ENCODE measurements at regions of chr3 and their contacts with region 1.

Region 1: GRCh38 chr3:107938143-107938542 is 152.7 kb downstream of the CD47 start:
- DNase-seq: no peak
- H3K4me3 ChIP-seq: no peak overlapping the region
- H3K27ac ChIP-seq: no peak overlapping the region
- H3K4me1 ChIP-seq: peaks cover 0 to 16% (median 7%) of the 10 kb centered on the region in 4 donors
- H3K27me3 ChIP-seq: no peaks in the 10 kb centered on the region
- CTCF ChIP-seq: peak; percentile 51 to 57 (median 55)
- EP300 ChIP-seq: no peak
- POLR2A ChIP-seq: no peak

Region 2: DNA sequence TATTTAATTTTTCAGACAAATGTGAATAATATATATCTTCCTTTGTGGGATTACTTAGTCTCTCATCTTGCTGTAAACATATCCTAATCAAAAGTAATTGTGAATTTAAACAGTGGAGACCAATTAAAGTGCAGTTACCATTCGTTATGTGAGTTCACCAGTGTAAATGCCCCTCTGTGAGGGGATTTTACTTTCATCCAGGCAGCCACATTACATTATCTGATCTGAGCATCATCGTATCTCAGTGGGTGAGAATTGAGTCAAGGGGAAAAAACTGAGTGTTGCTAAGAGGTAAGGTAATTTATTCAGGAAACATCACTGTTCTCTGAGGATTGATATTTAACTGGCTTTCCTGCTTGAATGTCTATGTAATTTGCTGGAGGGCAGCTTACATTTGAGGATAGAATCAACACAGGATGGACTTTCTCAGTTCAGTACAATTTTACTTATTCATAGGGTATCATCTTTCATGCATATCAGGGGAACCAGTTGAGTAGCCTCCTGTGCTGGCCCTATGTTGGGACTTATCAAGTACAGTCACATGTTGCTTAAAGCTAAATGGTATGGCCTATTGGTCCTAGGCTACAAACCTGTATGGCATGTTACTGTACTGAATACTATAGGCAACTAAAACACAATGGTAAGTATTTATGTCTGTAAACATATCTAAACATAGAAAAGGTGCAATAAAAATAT is 67.1 kb before region 1 on chr3:
- intact Hi-C with region 1: no loop called
- DNase-seq: no peak
- H3K4me3 ChIP-seq: no peak overlapping the region
- H3K27ac ChIP-seq: no peak overlapping the region
- H3K4me1 ChIP-seq: peaks cover 0 to 19% (median 6%) of the 10 kb centered on the region in 4 donors
- H3K27me3 ChIP-seq: no peaks in the 10 kb centered on the region
- CTCF ChIP-seq: no peak
- EP300 ChIP-seq: no peak
- POLR2A ChIP-seq: no peak

Region 3: GRCh38 chr3:108090701-108091451 is 152.7 kb after region 1 on chr3 and contains the start of gene CD47:
- intact Hi-C with region 1: loop called (anchors 5 kb)
- DNase-seq: peak; percentile 97
- H3K4me3 ChIP-seq: peak within 1 kb of the TSS; percentile 79 to 100 (median 94)
- H3K27ac ChIP-seq: peak within 1 kb of the TSS; percentile 91 to 96 (median 94)
- H3K4me1 ChIP-seq: peaks cover 2 to 47% (median 34%) of the 10 kb centered on the region in 4 donors
- H3K27me3 ChIP-seq: no peaks in the 10 kb centered on the region
- CTCF ChIP-seq: peak in 1 of 3 experiments; percentile 9
- EP300 ChIP-seq: no peak
- POLR2A ChIP-seq: peak; percentile 4
- total RNA-seq, gene CD47: 31.6 to 57.7 (median 49.7) TPM

Region 4: GRCh38 chr3:108406661-108407206 is 468.6 kb after region 1 on chr3:
- intact Hi-C with region 1: loop called (anchors 10 kb)
- DNase-seq: no peak
- H3K4me3 ChIP-seq: no peak overlapping the region
- H3K27ac ChIP-seq: no peak overlapping the region
- H3K4me1 ChIP-seq: peaks cover 0 to 10% (median 5%) of the 10 kb centered on the region in 4 donors
- H3K27me3 ChIP-seq: no peaks in the 10 kb centered on the region
- CTCF ChIP-seq: peak; percentile 54 to 65 (median 54)
- EP300 ChIP-seq: no peak
- POLR2A ChIP-seq: no peak

Region 5: GRCh38 chr3:108489771-108490170 is 551.6 kb after region 1 on chr3:
- intact Hi-C with region 1: loop called (anchors 10 kb)
- DNase-seq: no peak
- H3K4me3 ChIP-seq: no peak overlapping the region
- H3K27ac ChIP-seq: no peak overlapping the region
- H3K4me1 ChIP-seq: peaks cover 3 to 23% (median 20%) of the 10 kb centered on the region in 4 donors
- H3K27me3 ChIP-seq: no peaks in the 10 kb centered on the region
- CTCF ChIP-seq: peak; percentile 77 to 84 (median 83)
- EP300 ChIP-seq: no peak
- POLR2A ChIP-seq: no peak

Measured in esophagus muscularis mucosa (tissue), 4 donors.